Activated CD8-positive, alpha-beta T cell treated with anti-CD3 and anti-CD28 coated beads for 36 hours (primary cell): ENCODE measurements at regions of chr5 and their contacts with region 1.

Region 1: GRCh38 chr5:181223058-181223728 is at the start of gene TRIM41:
- DNase-seq: peak; percentile 99
- ATAC-seq: peak; percentile 64
- H3K4me3 Mint-ChIP-seq: peak within 1 kb of the TSS; percentile 91
- H3K27ac Mint-ChIP-seq: peak within 1 kb of the TSS; percentile 97
- H3K4me1 Mint-ChIP-seq: peaks cover 48% of the 10 kb centered on the region
- H3K27me3 Mint-ChIP-seq: peaks cover 5% of the 10 kb centered on the region
- CTCF ChIP-seq: no peak
- total RNA-seq, gene TRIM41: 30.6 to 31.5 TPM

Region 2: DNA sequence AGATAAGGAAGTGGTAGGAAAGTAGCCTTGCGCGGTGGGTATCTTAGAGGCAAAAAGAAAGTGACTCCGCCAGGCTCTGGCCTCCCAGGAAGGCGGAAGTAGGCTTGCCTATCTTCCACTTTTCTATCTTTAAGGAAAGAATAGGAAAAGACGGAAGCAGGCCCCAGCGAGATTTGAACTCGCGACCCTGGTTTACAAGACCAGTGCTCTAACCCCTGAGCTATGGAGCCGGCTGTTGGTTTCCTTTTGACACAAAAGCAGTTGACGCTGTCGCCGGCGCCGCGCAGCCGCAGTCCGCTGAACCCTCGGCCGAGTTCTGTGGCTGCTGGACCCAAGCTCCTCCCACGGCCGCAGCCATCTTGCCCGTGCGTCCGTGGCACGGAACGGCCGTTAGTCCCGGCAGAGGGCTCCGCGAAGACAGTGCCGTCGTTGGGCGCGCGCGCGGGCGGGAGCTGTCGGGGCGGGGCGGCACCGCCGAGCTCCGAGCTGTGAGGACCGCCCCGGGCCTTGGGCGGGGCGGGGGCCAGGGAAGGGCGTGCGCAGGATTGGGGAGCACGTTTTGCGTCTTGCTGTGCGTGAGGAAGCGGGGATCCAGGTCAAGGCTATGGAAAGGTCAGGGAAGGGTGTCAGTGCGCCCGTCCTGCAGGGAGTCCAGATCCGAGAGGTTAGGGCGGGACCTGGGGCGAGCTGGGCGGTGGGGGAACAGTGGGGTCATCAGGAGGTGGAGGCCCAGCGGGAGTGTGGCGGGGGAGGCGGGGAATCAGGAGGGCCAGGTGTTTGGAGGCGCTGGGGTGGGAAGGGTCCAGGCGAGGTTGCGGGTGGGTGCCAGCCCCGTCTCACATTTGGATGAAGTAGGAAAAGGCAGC is 31.4 kb before region 1 on chr5:
- CTCF ChIA-PET with region 1: interaction called, 5 read pairs
- POLR2A ChIA-PET with region 1: interaction called, 26 read pairs
- intact Hi-C with region 1: loop called (anchors 2 kb)
- DNase-seq: peak; percentile 94
- ATAC-seq: peak; percentile 74
- H3K4me3 Mint-ChIP-seq: peak overlapping the region; percentile 91
- H3K27ac Mint-ChIP-seq: peak overlapping the region; percentile 97
- H3K4me1 Mint-ChIP-seq: peaks cover 27% of the 10 kb centered on the region
- H3K27me3 Mint-ChIP-seq: peaks cover 2% of the 10 kb centered on the region
- CTCF ChIP-seq: no peak

Region 3: GRCh38 chr5:181243512-181244343 is 20.5 kb after region 1 on chr5 and contains the start of gene RACK1:
- CTCF ChIA-PET with region 1: no interaction called
- POLR2A ChIA-PET with region 1: interaction called, 746 read pairs
- intact Hi-C with region 1: loop called (anchors 2 kb)
- DNase-seq: peak; percentile 94
- ATAC-seq: peak; percentile 68
- H3K4me3 Mint-ChIP-seq: peak within 1 kb of the TSS; percentile 99
- H3K27ac Mint-ChIP-seq: peak within 1 kb of the TSS; percentile 100
- H3K4me1 Mint-ChIP-seq: peaks cover 42% of the 10 kb centered on the region
- H3K27me3 Mint-ChIP-seq: no peaks in the 10 kb centered on the region
- CTCF ChIP-seq: no peak
- total RNA-seq, gene RACK1: 2,759 to 2,801 TPM